ENCODE measurements at regions of chr11 and their contacts with region 1.

Region 1: GRCh38 chr11:78564490-78565467 is 9.9 kb downstream of the NARS2 start:
- DNase-seq: peak in 1 of 10 donors; percentile 13

Region 2: GRCh38 chr11:78000193-78000592 is 564.6 kb before region 1 on chr11:
- intact Hi-C with region 1: loop called (anchors 5 kb)
- DNase-seq: peak in 3 of 10 donors; percentile 11 to 45 (median 25)

Region 3: DNA sequence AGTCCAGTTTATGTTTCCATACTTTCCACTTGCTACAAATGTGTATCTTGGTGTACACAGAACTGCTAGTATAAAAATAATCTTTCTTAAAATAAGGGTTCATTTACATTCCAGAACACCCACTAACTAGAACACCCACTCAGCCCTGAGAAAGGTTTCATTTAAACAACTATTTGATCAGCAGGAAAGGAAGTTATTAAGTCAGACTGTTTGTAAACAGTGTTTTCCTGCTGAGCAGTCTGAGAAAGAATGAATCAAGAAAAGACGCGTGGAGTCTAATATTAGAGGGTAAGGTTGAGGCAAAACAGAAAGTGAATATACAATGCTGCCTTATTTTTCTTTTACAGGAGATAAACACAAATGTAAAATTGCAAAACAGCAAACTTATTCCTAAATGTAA is 22.8 kb before region 1 on chr11:
- intact Hi-C with region 1: no loop called
- DNase-seq: no peak

Measured in posterior cingulate gyrus (tissue), 11 donors.